Panc1 (cell line): ENCODE measurements at regions of chr10 and their contacts with region 1.

Region 1: GRCh38 chr10:17430647-17431355 is 23.6 kb downstream of the ST8SIA6 start:
- DNase-seq: peak; percentile 71
- ATAC-seq: peak; percentile 91
- H3K4me3 ChIP-seq: no peak overlapping the region
- H3K27ac ChIP-seq: peak overlapping the region; percentile 69; the same call in 1 of the 2 replicates
- H3K4me1 ChIP-seq: no peaks in the 10 kb centered on the region; the same call in 1 of the 2 replicates
- H3K27me3 ChIP-seq: no peaks in the 10 kb centered on the region
- CTCF ChIP-seq: peak; percentile 91

Region 2: GRCh38 chr10:16777473-16778370 is 653.1 kb before region 1 on chr10:
- CTCF ChIA-PET with region 1: no interaction called
- POLR2A ChIA-PET with region 1: no interaction called
- in situ Hi-C with region 1: no loop called
- intact Hi-C with region 1: no loop called
- DNase-seq: peak; percentile 25
- ATAC-seq: no peak
- H3K4me3 ChIP-seq: no peak overlapping the region
- H3K27ac ChIP-seq: no peak overlapping the region
- H3K4me1 ChIP-seq: no peaks in the 10 kb centered on the region
- H3K27me3 ChIP-seq: no peaks in the 10 kb centered on the region
- CTCF ChIP-seq: peak; percentile 72

Region 3: DNA sequence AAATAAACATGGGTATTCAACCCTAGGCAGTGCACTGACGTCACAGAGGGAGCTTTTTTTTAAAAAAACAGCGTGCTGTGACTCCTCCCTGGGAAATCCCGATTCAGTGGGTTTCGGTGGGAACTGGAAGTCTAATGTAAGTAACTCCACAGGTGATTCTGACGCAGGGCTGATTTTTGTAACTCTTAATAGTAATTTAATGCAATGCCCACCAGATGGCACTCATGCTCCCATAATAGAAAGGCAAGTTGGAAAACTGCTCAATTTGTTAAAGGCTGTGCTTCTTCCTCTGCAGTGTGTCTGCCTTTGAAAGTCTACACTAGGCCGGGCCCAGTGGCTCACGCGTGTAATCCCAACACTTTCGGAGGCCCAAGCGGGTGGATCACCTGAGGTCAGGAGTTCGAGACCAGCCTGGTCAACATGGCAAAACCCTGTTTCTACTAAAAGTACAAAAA is 602.7 kb before region 1 on chr10:
- CTCF ChIA-PET with region 1: no interaction called
- POLR2A ChIA-PET with region 1: no interaction called
- in situ Hi-C with region 1: no loop called
- intact Hi-C with region 1: loop called (anchors 5 kb)
- DNase-seq: peak; percentile 55
- ATAC-seq: peak; percentile 87
- H3K4me3 ChIP-seq: peak overlapping the region; percentile 1 to 23; a peak in 3 of 4 replicates
- H3K27ac ChIP-seq: peak overlapping the region; percentile 72
- H3K4me1 ChIP-seq: peaks cover 15% of the 10 kb centered on the region
- H3K27me3 ChIP-seq: no peaks in the 10 kb centered on the region
- CTCF ChIP-seq: peak; percentile 66

Region 4: DNA sequence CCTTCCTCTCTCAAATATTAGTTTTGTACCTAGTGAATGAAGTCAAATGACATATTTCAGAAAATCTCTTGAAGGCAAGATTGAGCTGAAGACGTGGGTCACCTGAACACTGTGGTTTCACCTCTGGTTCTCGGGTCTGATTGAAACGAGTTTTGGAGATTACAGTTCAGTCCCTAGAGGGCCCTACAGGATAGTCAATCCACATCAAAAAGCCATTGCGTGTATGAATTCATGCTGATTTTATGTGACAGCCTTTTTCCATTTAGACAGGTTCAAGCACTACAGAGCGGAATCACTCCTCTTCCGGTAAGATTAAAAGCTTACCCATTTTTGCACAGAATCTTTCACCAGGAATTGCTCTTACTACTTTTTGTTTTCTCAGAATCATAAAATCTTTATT is 140.6 kb before region 1 on chr10:
- CTCF ChIA-PET with region 1: no interaction called
- POLR2A ChIA-PET with region 1: no interaction called
- in situ Hi-C with region 1: no loop called
- intact Hi-C with region 1: loop called (anchors 1 kb)
- DNase-seq: peak; percentile 5
- ATAC-seq: peak; percentile 78; the same call in 1 of the 2 replicates
- H3K4me3 ChIP-seq: no peak overlapping the region
- H3K27ac ChIP-seq: no peak overlapping the region
- H3K4me1 ChIP-seq: no peaks in the 10 kb centered on the region; the same call in 1 of the 2 replicates
- H3K27me3 ChIP-seq: no peaks in the 10 kb centered on the region
- CTCF ChIP-seq: peak; percentile 55

Region 5: GRCh38 chr10:17407047-17407446 is 23.8 kb before region 1 on chr10:
- CTCF ChIA-PET with region 1: interaction called, 10 read pairs
- POLR2A ChIA-PET with region 1: no interaction called
- in situ Hi-C with region 1: no loop called
- intact Hi-C with region 1: no loop called
- DNase-seq: no peak
- ATAC-seq: no peak
- H3K4me3 ChIP-seq: no peak overlapping the region
- H3K27ac ChIP-seq: no peak overlapping the region
- H3K4me1 ChIP-seq: no peaks in the 10 kb centered on the region
- H3K27me3 ChIP-seq: no peaks in the 10 kb centered on the region
- CTCF ChIP-seq: no peak